Activated naive CD4-positive, alpha-beta T cell treated with anti-CD3 and anti-CD28 coated beads for 36 hours (primary cell): ENCODE measurements at regions of chrX and their contacts with region 1.

Region 1: GRCh38 chrX:46903458-46904242 is 8.6 kb upstream of the JADE3 start:
- DNase-seq: peak; percentile 63
- H3K4me3 Mint-ChIP-seq: peak overlapping the region; percentile 59
- H3K27ac Mint-ChIP-seq: no peak overlapping the region
- H3K4me1 Mint-ChIP-seq: no peaks in the 10 kb centered on the region
- H3K27me3 Mint-ChIP-seq: peaks cover 3% of the 10 kb centered on the region

Region 2: GRCh38 chrX:46941341-46941740 is 37.7 kb after region 1 on chrX:
- CTCF ChIA-PET with region 1: no interaction called
- intact Hi-C with region 1: no loop called
- DNase-seq: no peak
- H3K4me3 Mint-ChIP-seq: no peak overlapping the region
- H3K27ac Mint-ChIP-seq: no peak overlapping the region
- H3K4me1 Mint-ChIP-seq: no peaks in the 10 kb centered on the region
- H3K27me3 Mint-ChIP-seq: peaks cover 3% of the 10 kb centered on the region

Region 3: GRCh38 chrX:46978341-46979291 is 75.0 kb after region 1 on chrX:
- CTCF ChIA-PET with region 1: interaction called, 9 read pairs
- intact Hi-C with region 1: loop called (anchors 1 kb)
- DNase-seq: peak; percentile 87
- H3K4me3 Mint-ChIP-seq: no peak overlapping the region
- H3K27ac Mint-ChIP-seq: no peak overlapping the region
- H3K4me1 Mint-ChIP-seq: no peaks in the 10 kb centered on the region
- H3K27me3 Mint-ChIP-seq: no peaks in the 10 kb centered on the region

Region 4: DNA sequence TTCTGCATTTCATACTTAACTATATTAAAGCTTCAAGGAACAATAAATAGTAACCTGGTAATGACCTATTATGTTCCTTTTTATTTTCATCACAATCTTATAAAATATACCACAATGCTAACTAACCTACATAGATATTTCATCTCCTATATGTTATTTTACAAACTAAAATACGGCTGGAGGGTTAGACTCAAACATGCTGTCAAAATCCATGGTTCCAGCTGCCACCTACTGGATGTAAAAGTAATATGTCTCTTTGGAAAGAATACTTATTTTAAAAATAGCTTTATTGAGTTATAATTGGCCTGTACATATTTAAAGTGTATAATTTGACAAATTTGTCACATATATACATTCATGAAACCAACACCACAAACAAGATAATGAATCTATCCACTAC is 189.6 kb after region 1 on chrX:
- CTCF ChIA-PET with region 1: interaction called, 6 read pairs
- intact Hi-C with region 1: loop called (anchors 1 kb)
- DNase-seq: peak; percentile 21
- H3K4me3 Mint-ChIP-seq: no peak overlapping the region
- H3K27ac Mint-ChIP-seq: no peak overlapping the region
- H3K4me1 Mint-ChIP-seq: peaks cover 13% of the 10 kb centered on the region
- H3K27me3 Mint-ChIP-seq: no peaks in the 10 kb centered on the region

Region 5: GRCh38 chrX:47958761-47959342 is 1055.2 kb after region 1 on chrX:
- CTCF ChIA-PET with region 1: no interaction called
- intact Hi-C with region 1: no loop called
- DNase-seq: peak; percentile 33
- H3K4me3 Mint-ChIP-seq: no peak overlapping the region
- H3K27ac Mint-ChIP-seq: no peak overlapping the region
- H3K4me1 Mint-ChIP-seq: no peaks in the 10 kb centered on the region
- H3K27me3 Mint-ChIP-seq: no peaks in the 10 kb centered on the region